ENCODE measurements at regions of chr2 and their contacts with region 1.

Region 1: GRCh38 chr2:26846328-26847306 is 1.3 kb upstream of the DPYSL5 start:
- H3K4me3 ChIP-seq: no peak overlapping the region
- H3K27ac ChIP-seq: no peak overlapping the region; the same call in 1 of the 2 replicates
- H3K4me1 ChIP-seq: peaks cover 3% of the 10 kb centered on the region
- CTCF ChIP-seq: peak; percentile 95

Region 2: DNA sequence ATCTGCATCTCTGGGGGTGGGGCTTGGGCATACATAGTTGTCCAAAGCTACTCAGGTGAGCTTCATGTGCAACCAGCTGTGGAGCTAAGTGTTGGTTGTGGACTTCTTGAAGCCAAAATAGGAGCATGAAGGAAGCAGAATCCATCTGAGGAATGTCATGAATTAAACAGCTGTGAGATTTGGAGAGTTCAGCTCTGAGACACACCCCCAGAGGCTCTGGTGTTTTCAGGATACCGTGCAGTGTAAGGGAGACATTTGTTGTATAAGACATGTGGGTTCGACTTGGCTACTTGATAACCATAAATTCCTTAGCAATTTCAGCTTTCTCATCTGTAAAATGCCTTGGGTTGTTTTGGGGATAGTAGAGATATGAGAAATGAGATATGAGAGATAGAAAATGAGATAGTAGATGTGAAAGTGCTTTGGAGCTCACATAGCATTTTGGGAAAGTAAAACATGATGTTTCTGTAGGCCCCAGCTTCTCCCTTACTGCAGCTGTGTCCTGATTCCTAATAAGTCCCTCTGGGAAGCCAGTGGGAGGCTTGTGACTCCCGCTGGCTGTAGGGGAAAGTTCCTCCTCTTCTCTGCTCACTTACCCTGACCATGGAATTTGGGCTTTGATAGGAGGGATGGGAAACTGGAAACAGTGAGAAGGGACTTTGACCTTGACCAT is 51.3 kb after region 1 on chr2:
- CTCF ChIA-PET with region 1: interaction called, 12 read pairs
- POLR2A ChIA-PET with region 1: no interaction called
- H3K4me3 ChIP-seq: no peak overlapping the region
- H3K27ac ChIP-seq: no peak overlapping the region
- H3K4me1 ChIP-seq: no peaks in the 10 kb centered on the region
- CTCF ChIP-seq: no peak

Region 3: DNA sequence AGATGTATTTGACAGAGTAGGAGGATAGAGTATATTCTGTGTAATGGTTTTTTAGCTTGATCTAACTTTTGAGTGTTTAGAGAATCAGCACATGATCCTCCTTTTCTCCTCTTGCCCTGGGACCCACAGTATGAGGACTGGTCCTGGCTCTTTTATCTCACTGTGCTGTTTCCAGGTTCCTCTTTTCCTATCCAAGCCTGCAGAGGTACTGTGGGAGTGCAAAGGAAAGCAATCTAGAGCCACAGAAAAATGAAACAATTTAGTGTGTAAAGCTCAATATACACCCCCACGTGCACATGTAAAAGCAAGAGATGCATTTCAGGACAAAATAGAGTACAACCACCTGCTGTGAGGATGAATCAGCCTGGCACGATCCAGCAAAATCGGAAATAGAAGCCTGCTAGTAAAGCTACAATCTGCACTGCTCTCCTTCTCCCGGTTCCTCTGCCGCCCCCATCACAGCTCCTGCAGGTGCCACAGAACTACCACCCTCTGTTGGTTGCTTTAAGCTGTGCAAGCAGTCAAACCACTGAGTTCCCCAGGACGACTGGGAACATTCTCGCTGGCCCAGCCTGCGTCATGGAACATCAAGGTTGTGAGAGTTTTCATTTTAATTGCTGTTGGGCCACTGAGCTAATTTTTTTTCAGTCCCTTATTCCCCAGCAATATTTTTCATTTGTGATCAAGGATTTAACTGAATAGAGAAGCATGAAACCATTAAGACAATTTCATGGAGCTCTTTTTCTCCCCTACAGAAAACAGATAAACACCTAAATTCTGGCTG is 76.0 kb after region 1 on chr2:
- CTCF ChIA-PET with region 1: interaction called, 100 read pairs
- POLR2A ChIA-PET with region 1: interaction called, 9 read pairs
- H3K4me3 ChIP-seq: no peak overlapping the region
- H3K27ac ChIP-seq: no peak overlapping the region
- H3K4me1 ChIP-seq: peaks cover 5% of the 10 kb centered on the region
- CTCF ChIP-seq: peak; percentile 83

Region 4: DNA sequence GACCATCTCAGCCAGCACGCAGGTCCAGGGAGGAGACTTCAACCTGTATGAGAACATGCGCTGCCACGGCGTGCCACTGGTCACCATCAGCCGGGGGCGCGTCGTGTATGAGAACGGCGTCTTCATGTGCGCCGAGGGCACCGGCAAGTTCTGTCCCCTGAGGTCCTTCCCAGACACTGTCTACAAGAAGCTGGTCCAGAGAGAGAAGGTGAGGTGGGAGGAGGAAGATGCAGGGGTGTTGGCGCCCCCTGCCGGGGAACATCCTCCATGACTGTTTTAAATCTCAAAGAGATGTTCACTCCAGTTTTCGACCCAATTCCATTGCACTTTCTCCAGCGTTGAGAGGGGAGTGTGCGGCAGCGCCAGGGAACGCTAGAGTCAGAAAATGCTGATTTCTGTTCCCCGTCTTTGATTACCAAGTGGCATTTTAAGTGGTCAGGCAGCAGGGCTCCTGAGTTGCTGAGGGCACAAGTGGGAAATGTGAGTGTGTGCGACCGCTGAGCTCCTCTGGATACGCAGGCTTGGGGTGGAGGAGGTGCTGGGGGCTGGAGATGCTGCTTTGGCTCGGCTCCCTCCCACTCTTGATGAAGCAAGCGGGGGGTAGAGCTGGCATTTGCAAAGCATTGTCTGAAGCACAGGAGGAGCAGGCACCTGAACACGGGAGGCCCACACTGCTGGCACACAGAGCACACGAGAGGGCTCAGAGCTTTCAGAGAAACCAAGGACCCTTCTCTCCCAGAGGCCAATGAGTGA is 96.1 kb after region 1 on chr2:
- CTCF ChIA-PET with region 1: interaction called, 156 read pairs
- POLR2A ChIA-PET with region 1: interaction called, 9 read pairs
- H3K4me3 ChIP-seq: no peak overlapping the region
- H3K27ac ChIP-seq: no peak overlapping the region
- H3K4me1 ChIP-seq: no peaks in the 10 kb centered on the region
- CTCF ChIP-seq: peak; percentile 62

Region 5: GRCh38 chr2:26959331-26959730 is 112.7 kb after region 1 on chr2:
- CTCF ChIA-PET with region 1: interaction called, 62 read pairs
- POLR2A ChIA-PET with region 1: interaction called, 6 read pairs
- H3K4me3 ChIP-seq: no peak overlapping the region
- H3K27ac ChIP-seq: no peak overlapping the region
- H3K4me1 ChIP-seq: peaks cover 5% of the 10 kb centered on the region; the same call in 1 of the 2 replicates
- CTCF ChIP-seq: no peak